ENCODE measurements at regions of chr1 and their contacts with region 1.

Region 1: GRCh38 chr1:230548357-230548756 is 93.9 kb upstream of the COG2 start:
- DNase-seq: no peak
- H3K4me3 ChIP-seq: no peak overlapping the region
- H3K27ac ChIP-seq: no peak overlapping the region
- H3K4me1 ChIP-seq: no peaks in the 10 kb centered on the region
- H3K27me3 ChIP-seq: peaks cover 53% of the 10 kb centered on the region
- CTCF ChIP-seq: no peak

Region 2: GRCh38 chr1:230509281-230509977 is 38.9 kb before region 1 on chr1:
- CTCF ChIA-PET with region 1: no interaction called
- dilution Hi-C with region 1: no loop called
- in situ Hi-C with region 1: no loop called
- intact Hi-C with region 1: loop called (anchors 5 kb)
- DNase-seq: peak; percentile 85
- H3K4me3 ChIP-seq: no peak overlapping the region
- H3K27ac ChIP-seq: no peak overlapping the region
- H3K4me1 ChIP-seq: peaks cover 24% of the 10 kb centered on the region
- H3K27me3 ChIP-seq: no peaks in the 10 kb centered on the region
- CTCF ChIP-seq: no peak

Region 3: GRCh38 chr1:230568008-230568407 is 19.7 kb after region 1 on chr1:
- CTCF ChIA-PET with region 1: no interaction called
- dilution Hi-C with region 1: no loop called
- in situ Hi-C with region 1: no loop called
- intact Hi-C with region 1: no loop called
- DNase-seq: peak; percentile 11
- H3K4me3 ChIP-seq: no peak overlapping the region
- H3K27ac ChIP-seq: peak overlapping the region; percentile 20
- H3K4me1 ChIP-seq: peaks cover 3% of the 10 kb centered on the region
- H3K27me3 ChIP-seq: peaks cover 9% of the 10 kb centered on the region
- CTCF ChIP-seq: peak; percentile 13 to 35